Left cardiac atrium (tissue), 4 donors: ENCODE measurements at regions of chr7 and their contacts with region 1.

Region 1: DNA sequence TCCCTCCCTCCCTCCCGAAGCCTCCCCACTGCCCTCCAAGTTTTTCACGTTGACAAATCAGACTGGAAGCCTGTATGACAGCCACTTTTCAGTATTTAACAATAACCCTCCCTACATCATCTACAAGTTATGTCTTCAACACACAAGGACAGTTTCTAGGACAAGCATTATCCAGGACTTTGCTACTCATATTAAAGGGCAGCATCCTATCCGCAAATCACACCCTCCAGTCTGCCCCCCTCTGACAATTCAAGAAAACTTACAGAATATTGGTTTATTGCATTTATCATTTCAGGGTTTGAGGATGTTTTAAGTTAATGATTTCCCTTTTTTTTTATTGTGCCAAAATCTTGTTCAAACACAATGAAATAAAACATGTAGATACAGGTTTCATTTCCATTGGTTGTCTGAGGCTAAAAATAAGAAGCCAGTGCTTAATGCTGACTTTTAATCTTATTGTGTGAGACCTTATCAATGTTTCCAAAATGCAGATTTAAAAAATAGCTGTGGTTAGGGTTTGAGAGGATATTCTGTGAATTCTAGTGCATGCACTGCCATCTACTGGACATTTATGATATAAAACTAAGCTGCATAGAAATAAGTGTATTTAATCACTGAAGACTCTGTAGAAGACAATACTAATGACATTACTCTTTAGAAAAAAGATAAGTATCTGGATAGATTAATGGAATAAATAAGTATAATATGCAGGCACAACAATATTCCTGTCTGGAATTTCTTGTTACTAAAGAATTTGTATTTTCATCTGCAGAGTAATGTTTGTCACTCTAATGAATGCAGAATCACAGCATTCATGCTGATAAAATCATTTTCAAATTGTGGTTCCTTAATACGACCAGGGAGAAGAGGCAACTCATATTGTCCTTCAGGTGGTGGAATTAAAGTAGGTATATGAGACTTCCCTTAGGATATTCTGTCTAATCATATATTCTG is 64.1 kb downstream of the CAV1 start:
- DNase-seq: no peak
- ATAC-seq: peak; percentile 47 to 57

Region 2: DNA sequence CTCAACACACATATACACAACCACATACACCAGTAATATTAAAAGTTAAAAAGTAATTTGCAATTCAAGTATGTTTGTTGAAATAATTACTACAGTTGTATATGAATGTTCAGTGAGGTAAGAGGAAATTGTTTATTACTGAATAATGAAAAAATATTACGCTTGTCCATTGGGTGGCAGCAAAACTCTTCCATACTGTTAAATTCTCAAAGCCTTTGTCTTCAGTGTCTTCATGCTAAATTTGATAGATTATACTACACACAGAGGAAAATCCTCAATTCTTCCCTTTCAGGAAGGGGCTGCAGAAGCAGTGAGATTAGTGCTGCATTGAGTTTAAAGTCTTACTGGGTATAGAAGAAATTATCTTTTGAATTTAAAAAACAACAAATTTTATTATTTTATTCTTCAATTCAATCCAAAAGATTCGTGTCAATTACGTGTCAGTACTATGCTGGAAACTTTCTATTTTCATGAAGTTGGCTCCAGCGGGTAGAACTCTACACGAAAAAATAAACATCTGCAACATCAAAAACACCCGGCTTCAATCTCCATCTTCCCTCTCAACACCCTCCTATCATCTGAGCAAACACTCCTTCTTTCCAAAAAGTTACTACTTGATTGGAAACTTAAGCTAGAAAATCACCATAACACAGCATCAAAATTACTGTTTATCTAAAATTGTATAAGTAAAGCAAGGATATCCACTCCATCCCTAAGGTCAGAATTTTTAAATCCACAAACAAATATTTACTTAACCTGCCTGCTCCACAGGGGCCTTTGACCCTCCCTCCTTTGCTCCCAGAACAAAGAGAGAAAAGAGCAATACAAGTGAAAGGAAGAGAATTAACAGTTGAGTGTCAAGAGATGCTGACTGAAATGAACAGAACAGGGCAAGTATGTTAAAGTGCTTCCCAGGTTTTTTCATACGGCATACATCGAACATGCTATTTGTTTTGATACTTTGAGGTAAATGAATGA is 415.6 kb before region 1 on chr7:
- intact Hi-C with region 1: loop called in 1 of 2 experiments (anchors 10 kb)
- DNase-seq: no peak
- ATAC-seq: peak in 1 of 2 donors; percentile 38

Region 3: DNA sequence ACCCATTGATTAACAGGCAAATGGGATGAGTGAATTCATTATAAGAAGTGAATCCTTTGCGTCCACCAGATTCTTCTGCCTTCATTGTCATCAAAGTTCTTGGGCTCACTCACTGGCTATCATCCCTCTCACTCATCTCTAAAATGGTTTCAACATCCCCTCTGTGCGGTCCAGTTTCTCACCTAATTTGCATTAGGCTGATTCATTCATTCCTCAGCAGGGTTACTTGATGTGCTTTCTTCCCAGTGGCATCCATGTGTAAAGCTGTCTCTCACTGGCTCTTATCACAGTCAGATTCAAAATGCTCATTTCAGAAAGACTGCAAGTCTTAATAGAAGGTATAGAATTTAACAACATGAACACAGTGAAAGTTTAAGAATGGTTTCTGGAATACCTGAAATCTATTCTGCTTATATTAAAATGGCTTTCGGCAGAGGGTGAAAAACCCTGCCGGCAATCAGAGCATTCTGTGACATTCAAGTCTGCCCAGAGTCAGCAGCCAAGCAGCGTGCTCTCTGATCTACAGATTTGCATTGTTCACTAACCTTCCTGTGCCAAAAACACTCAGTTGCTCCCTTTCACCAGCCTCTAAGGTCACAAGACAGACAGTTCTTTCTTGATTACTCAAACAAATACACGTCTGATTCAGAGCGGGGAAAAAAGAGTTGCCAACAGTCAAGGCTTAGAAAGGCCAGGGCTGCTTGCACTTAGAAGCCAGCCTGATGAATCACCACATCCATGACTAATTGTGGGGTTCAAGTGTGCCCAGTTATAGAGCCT is 271.9 kb before region 1 on chr7:
- intact Hi-C with region 1: no loop called
- DNase-seq: peak; percentile 64
- ATAC-seq: peak; percentile 87 to 97

Region 4: DNA sequence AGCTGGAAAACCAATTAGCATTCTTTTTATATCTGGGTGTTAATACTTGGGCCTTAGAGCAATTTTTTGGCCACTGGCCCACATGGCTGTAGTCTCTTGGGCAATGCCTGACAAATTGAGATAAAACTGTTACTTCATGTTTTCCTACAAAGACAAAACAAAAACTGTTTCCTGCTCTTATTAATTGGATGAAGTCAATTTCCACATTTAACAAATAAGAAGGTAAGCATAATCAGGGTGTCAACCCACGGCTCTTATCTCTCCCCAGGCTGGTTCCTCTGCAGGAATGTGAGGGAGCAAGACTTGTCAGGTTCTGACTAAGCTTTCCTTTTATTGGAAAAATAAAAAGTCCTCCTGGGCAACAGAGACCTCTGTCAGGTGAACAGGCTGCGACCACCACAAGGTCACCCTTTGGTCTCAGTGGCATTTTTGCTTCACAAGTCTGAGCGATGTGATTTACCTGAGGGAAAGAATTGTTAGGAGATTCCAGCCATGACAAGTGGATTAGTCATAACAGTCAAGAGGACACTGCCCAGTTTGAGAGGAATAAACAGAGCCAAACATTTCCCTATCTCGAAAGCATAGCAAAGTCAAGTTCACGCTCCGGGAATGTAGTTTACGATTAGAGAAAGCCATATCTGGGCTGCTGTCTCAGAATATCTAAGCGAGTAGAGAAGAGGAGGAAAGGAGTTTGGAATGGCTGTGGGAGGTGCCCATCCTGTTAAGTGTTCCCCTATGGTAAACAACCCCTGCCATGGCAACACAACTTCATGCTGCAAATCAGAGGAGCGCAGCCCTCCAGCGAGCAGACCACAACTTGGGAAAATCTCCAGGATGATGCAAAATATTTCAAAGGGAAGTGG is 234.1 kb before region 1 on chr7:
- intact Hi-C with region 1: loop called (anchors 10 kb)
- DNase-seq: peak; percentile 84
- ATAC-seq: peak; percentile 86 to 93

Region 5: DNA sequence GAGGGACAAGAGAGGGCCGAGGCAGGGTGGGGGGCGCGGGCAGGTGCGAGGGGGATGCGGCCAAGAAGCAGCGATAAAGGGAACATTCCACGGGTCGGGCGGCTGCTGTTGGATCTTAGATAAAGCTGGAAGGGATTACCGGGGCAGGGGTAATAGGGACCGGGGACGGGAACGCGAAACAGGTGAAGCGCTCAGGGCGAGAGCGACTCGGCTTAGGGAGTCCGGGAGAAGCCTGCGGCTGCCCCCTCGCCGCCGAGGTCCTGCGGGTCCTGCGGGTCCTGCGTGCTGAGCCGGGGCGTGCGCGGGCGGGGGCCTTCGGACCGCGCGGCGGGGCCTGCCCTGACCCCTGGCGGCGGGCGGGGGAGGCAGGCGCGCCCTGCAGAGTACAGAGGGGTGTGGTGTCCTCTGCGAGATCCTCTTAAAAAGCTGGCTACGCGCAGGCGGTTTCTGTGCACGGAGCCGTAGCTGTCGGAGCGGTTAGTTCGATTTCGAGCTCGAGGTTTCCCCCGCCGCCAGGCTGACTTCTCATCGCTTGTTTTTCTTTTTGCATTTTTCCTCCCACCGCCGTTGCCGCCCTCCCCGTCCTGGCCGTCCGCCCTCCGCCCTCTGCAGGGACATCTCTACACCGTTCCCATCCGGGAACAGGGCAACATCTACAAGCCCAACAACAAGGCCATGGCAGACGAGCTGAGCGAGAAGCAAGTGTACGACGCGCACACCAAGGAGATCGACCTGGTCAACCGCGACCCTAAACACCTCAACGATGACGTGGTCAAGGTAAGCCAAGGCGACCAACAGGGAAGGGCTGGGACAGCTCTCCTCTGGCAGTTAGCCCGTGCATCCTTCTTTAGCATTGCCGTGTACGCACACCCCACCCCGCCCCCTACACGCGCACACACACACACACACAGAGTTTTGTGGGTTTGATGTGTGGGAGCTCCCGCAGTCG is 62.7 kb before region 1 on chr7:
- intact Hi-C with region 1: loop called (anchors 5 to 10 kb)
- DNase-seq: peak; percentile 84
- ATAC-seq: peak; percentile 86 to 88

Region 6: DNA sequence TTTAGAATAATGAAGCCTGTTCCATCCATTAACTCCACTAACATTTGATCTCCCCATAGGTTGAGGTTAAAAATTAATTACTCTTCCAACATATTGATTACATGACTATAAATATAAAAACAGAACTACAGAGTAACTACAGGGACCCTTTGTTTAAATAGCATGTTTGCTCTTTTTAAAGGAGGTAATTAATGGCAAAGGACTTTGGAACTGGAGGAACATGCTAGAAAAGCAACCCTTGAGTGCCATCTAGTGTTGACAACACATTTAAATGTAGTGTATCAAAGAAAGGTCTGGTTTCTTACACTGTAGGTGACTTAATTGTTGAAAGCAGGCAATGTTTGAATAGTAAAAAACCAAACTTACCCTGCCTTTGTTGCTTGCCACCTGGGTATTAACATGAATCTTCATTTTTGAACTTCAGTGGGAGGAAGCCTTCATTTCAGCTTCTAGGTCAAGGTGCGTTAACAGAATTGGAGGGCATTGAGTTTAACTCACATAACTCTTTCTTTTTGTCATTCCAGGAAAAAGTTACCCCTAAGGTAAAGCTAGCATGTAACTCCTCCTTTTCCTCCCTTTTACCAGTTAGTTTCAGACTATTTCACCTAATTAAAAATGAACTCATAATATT is 220.8 kb after region 1 on chr7:
- intact Hi-C with region 1: loop called in 1 of 2 experiments (anchors 2 kb)
- DNase-seq: no peak
- ATAC-seq: peak; percentile 75 to 77

Region 7: DNA sequence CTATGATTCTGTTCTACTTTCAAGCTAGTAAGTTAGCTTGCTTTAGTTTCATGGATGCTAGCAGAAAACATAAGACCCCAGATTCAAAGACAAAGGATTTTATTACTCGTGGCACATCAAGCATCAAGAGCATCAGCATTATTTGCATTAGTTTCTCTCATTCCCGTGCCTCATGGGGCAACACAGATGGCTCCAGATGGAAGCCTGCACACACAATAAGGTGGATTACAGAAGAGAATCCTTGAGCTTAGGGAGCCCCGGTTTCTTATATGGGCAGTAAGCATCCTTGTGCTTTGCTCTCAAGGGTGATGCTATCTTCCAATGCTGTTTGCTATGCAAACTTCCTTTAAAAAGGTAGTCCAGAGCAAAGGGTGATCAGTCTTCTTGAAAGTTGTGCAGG is 262.8 kb after region 1 on chr7:
- intact Hi-C with region 1: no loop called
- DNase-seq: no peak
- ATAC-seq: no peak